ENCODE measurements at regions of chr6 and their contacts with region 1.

Region 1: GRCh38 chr6:149513915-149514314 is 29.1 kb upstream of the ZC3H12D start:
- DNase-seq: no peak
- ATAC-seq: peak; percentile 28

Region 2: GRCh38 chr6:149082286-149082707 is 431.6 kb before region 1 on chr6:
- intact Hi-C with region 1: loop called (anchors 5 kb)
- DNase-seq: peak; percentile 82
- ATAC-seq: peak; percentile 54

Region 3: DNA sequence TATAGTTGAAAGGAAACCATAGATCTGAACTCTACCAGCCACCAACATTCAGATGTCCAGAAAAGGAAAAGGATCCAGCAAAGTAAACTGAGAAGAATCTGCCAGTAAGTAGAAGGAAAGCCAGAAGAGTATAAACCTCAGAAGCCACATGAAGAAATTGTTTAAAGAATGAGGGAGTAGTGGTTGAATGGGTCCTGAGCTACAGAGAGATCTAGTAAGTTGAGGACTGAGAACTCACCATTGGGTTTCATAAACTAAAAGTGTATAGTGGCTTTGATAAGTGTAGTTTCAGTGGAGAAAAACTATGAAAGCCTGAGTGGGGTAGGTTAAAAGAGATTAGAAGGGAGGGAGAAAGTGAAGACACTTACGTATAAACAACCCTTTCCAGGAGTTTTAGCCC is 145.8 kb before region 1 on chr6:
- intact Hi-C with region 1: no loop called
- DNase-seq: no peak
- ATAC-seq: no peak

Region 4: DNA sequence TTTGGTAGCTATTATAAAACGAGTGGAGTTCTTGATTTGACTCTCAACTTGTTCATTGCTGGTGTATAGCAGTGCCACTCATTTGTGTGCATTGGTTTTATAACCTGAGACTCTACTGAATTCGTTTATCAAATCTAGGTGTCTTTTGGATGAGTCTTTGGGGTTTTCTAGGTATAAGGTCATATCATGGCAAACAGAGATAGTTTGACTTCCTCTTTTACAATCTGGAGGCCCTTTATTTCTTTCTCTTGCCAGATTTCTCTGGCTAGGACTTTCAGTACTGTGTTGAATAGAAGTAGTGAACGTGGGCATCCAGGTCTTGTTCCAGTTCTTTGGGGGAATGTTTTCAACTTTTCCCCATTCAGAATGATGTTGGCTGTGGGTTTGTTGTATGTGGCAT is 75.1 kb before region 1 on chr6:
- intact Hi-C with region 1: loop called (anchors 5 kb)
- DNase-seq: no peak
- ATAC-seq: no peak

Region 5: DNA sequence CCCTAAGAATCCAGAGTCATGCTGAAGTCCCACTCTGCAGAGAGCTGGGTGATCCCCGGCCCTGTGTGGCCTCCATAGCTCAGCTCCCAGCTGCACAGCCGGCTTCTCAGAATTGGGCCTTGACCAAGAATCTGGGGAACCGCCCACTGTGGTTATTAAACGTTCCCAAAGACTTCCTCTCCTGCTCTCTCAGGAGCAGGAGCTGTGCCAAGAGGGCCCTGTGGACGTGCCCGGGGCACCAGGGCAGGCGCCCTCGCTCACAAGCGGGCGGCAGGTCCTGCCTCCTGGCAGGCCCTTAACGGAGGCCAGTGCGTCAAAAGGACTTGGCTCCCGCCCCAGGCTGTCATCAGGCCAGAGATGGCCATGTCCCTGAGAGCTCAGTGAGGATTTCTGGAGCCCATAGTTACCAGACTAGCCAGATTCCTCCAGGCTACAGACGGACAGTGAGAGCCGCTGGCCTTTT is 59.5 kb before region 1 on chr6:
- intact Hi-C with region 1: loop called (anchors 5 kb)
- DNase-seq: peak; percentile 98
- ATAC-seq: peak; percentile 91

Region 6: DNA sequence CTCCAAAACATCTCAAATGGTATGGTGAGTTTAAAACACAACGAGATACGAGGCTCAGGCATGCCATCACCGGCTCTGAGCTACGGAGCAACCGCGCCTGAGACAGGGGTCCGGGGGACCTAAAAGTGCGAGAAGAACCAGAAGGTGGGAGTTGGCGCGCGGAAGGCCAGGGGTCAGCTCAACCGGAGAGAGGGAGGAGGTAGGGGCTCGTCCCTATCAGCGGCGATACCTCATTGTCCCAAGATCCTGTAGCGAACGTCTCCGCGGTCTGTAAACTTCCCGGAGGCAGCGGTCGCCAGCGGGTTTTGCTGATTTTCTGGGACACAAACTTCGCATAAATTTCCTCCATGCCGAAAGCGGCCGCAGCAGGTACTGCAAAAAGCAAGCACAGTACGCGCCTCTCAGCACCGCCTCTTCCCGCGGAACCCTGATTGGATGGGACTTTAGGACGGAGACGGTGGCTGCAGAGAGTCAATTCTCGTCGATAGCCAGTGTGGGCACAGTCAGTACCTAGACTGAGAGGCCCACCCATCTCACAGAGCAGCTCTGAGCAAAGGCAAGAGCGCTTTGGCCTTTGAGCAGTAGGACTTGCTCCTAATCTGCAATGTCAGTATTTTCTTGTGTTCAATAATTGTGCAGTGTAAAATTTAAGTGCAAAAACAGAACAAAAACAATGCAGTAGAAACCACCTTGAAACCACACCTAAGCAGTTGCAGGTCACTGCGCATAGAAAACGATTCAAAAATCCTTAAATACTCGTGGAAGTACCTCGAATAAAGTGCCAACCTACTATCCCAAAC is 232.4 kb after region 1 on chr6 and contains the start of gene NUP43:
- intact Hi-C with region 1: no loop called
- DNase-seq: peak; percentile 95
- ATAC-seq: peak; percentile 82
- total RNA-seq, gene NUP43: 28.1 TPM